ENCODE measurements at regions of chr16 and their contacts with region 1.

Region 1: DNA sequence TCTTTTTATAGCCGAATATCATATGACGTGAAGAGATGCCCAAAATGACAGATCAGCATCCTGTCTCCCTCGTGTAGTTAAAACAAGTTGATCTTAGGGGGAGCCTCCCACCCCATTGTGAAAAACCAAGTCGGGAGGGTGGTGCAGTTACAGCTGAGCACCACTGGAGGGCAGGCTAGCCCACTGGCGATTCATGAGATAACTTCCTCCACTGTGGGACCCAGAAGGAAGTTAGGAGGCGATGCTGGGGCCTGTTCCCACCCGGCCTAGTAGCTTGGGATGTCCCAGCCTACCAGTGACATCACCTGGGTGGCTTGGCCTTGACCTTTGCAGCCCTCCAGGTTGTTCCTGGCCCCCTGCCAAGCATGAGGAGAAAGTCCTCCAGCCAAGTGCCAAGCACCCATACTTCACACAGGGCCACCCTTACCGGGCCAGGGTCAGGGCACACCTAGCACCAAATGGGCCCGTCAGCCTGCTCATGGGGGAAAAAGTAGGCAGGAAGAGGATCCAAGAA is 8.1 kb upstream of the CPNE2 start:
- DNase-seq: peak; percentile 87
- H3K4me3 ChIP-seq: peak overlapping the region in 1 of 2 experiments; percentile 47; a peak in 1 of 4 replicates
- H3K27ac ChIP-seq: no peak overlapping the region
- H3K4me1 ChIP-seq: peaks cover 0 to 4% of the 10 kb centered on the region in 2 experiments; a peak in 1 of 4 replicates
- H3K27me3 ChIP-seq: no peaks in the 10 kb centered on the region
- CTCF ChIP-seq: peak; percentile 97
- EP300 ChIP-seq: no peak
- RAD21 ChIP-seq: peak; percentile 91

Region 2: GRCh38 chr16:57061084-57061905 is 23.0 kb before region 1 on chr16:
- CTCF ChIA-PET with region 1: interaction called, 22 read pairs
- POLR2A ChIA-PET with region 1: interaction called, 7 read pairs
- DNase-seq: peak; percentile 75
- H3K4me3 ChIP-seq: no peak overlapping the region
- H3K27ac ChIP-seq: peak overlapping the region; percentile 35 to 89; a peak in 3 of 4 replicates
- H3K4me1 ChIP-seq: peaks cover 8 to 21% of the 10 kb centered on the region in 2 experiments; a peak in 3 of 4 replicates
- H3K27me3 ChIP-seq: no peaks in the 10 kb centered on the region
- CTCF ChIP-seq: no peak
- EP300 ChIP-seq: no peak
- RAD21 ChIP-seq: no peak

Region 3: DNA sequence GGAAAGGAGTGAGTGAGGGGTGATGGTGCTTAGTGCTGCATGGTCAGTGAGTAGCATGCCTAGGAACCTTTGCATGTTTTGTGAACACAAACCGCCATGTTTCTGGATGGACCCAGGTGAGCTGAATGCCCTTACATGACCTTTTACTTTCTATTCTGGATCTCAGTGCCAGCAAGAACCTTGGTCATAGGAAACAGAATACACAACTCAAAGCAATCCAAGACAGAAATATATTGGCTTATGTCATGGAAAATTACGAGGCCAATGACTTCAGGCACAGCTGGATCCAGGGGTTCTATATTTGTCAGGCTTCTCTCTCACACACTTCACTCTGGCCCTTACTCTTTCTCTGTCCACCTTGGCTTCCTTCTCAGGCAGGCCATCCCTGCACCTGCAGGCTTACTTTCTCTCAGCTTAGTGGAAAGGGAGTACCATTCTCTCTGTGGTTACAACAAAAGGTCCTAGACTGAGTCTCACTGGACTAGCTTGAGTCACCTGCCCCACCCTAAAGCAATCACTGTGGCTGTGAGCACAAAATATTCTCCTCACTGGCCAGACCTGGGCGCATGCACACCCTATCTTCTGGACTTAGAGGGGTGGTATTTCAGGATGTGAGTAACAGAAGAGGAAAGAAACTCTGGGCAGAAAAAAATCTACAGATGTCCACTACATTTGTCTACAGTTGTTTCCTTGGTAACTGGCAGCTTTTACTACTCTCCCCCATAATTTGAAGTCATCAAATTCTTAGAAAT is 12.3 kb before region 1 on chr16:
- CTCF ChIA-PET with region 1: interaction called, 22 read pairs
- POLR2A ChIA-PET with region 1: no interaction called
- DNase-seq: no peak
- H3K4me3 ChIP-seq: no peak overlapping the region
- H3K27ac ChIP-seq: peak overlapping the region in 1 of 2 experiments; percentile 49; a peak in 2 of 4 replicates
- H3K4me1 ChIP-seq: peaks cover 0 to 4% of the 10 kb centered on the region in 2 experiments; a peak in 1 of 4 replicates
- H3K27me3 ChIP-seq: no peaks in the 10 kb centered on the region
- CTCF ChIP-seq: no peak
- EP300 ChIP-seq: no peak
- RAD21 ChIP-seq: no peak

Region 4: DNA sequence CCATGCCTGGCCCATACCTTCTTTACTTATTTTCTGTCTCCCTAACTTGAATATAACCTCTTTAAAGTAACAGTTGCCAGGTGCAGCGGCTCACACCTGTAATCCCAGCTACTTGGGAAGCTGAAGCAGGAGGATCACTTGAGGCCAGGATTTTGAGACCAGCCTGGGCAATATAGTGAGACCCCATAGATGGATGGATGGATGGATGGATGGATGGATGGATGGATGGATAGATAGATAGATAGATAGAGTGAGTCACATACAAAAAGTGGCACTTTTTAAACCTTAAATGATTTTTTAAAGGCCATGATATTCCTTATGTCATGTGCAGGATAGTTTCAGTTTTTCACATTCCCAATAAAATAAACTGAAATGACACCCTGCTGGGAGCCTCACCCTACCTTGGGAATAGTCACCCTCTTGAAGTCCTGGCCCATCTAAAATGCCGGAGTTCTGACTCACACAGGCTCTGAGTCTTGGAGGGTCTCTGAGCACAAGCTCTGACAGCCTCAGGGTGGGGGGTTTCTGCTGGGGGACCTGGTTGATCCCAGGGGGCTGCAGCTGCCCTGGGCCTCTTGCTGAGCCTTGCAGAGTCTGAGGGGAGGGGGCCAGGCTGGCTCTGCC is 34.3 kb after region 1 on chr16:
- CTCF ChIA-PET with region 1: interaction called, 10 read pairs
- POLR2A ChIA-PET with region 1: no interaction called
- DNase-seq: no peak
- H3K4me3 ChIP-seq: no peak overlapping the region
- H3K27ac ChIP-seq: no peak overlapping the region
- H3K4me1 ChIP-seq: peaks cover 0 to 15% of the 10 kb centered on the region in 2 experiments; a peak in 1 of 4 replicates
- H3K27me3 ChIP-seq: no peaks in the 10 kb centered on the region
- CTCF ChIP-seq: no peak
- EP300 ChIP-seq: no peak
- RAD21 ChIP-seq: no peak

Region 5: GRCh38 chr16:57166951-57167350 is 82.6 kb after region 1 on chr16:
- CTCF ChIA-PET with region 1: interaction called, 11 read pairs
- POLR2A ChIA-PET with region 1: interaction called, 4 read pairs
- DNase-seq: no peak
- H3K4me3 ChIP-seq: no peak overlapping the region
- H3K27ac ChIP-seq: no peak overlapping the region
- H3K4me1 ChIP-seq: peaks cover 0 to 3% of the 10 kb centered on the region in 2 experiments; a peak in 1 of 4 replicates
- H3K27me3 ChIP-seq: no peaks in the 10 kb centered on the region
- CTCF ChIP-seq: no peak
- EP300 ChIP-seq: no peak
- RAD21 ChIP-seq: no peak

Region 6: DNA sequence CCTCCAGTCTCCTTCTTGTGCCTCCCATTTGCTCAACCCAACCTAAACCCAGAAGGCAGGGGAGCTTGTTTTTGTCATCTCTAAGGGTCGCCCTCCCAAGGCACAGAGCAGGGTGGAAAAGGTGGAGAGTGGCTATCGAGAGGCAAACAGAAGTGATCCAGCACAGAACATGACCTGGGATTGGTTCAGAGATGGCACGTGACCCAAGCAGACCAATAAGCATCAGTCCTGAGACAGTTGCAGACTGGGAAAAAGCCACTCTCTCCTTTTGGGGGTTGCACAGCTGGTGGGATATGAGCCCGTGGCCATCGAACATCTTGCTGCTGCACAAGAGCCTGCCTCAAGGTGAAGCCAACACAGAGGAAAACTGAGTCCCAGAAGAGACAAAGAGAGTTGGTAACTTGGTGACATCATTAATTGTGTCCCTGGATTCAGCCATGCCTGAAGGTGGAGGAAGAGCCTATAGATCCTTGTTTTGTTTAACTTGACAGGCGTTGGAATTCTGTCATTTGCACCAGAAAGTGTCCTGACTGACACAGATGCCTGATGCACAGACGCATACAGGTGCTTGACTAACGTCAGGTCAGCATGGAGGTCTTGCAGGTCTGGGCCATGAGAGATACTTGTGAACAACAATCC is 1141.8 kb after region 1 on chr16:
- CTCF ChIA-PET with region 1: no interaction called
- POLR2A ChIA-PET with region 1: no interaction called
- DNase-seq: no peak
- H3K4me3 ChIP-seq: no peak overlapping the region
- H3K27ac ChIP-seq: no peak overlapping the region
- H3K4me1 ChIP-seq: no peaks in the 10 kb centered on the region
- H3K27me3 ChIP-seq: no peaks in the 10 kb centered on the region
- CTCF ChIP-seq: no peak
- EP300 ChIP-seq: no peak
- RAD21 ChIP-seq: no peak

Measured in SK-N-SH (cell line).